ENCODE measurements at regions of chr12 and their contacts with region 1.

Region 1: DNA sequence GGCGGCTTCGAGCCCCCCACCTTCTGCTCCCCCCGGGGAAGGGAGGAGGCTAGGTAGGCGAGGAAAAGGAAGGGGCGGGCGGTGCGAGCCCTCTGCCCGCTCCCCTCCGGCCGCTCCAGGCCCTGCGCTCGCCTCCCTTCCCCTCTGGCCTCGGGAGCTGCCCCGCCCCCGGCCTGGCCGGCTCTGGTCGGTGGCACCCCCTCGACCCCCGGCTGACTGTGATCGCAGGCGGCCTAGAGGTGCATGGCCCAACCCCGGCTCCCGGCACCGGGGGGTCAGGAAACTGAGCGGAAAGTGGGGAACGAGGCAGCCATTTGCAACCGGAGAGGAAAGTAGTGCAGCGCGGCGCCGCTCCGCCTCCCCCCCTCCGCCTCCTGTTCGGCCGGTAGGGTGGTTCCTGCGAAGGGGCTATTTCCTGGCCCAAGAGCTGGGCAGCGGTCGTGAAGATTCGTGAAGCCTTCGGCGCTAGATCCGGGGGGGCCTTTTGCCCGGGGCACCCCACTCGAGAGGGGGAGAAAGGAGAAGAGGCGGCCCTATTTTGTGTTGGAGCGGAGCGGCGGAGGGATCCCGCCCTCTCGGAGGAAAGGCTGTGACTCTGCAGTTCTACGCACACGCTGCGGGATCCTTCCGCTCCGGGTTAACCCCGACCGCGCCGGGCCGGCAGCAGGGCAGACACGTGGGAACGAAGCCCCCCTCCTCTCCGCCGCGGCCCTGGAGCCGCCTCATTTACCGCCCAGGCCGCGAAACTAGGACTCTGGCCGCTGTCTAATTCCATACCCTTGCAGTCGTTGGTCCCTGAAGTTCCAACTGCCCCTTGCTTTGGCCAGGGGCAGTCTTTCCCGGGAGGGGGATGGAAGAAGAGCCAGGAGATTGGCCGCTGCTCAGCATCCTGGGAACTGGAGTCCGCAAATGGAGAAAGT is at the start of gene KMT2D:
- DNase-seq: peak; percentile 92 to 93
- ATAC-seq: peak; percentile 82 to 92 (median 86)
- H3K4me3 ChIP-seq: peak within 1 kb of the TSS; percentile 74 to 99 (median 97)
- H3K27ac ChIP-seq: peak within 1 kb of the TSS; percentile 95 to 100 (median 99)
- H3K4me1 ChIP-seq: peaks cover 23 to 51% (median 42%) of the 10 kb centered on the region in 9 donors
- H3K27me3 ChIP-seq: no peaks in the 10 kb centered on the region
- CTCF ChIP-seq: peak in 6 of 9 donors; percentile 31 to 46 (median 36)
- total RNA-seq, gene KMT2D: 32.6 to 65.3 (median 54.2) TPM

Region 2: GRCh38 chr12:49098035-49098451 is 37.5 kb after region 1 on chr12:
- intact Hi-C with region 1: loop called in 1 of 10 experiments (anchors 2 kb)
- DNase-seq: no peak
- ATAC-seq: peak in 3 of 8 donors; percentile 26 to 46 (median 29)
- H3K4me3 ChIP-seq: no peak overlapping the region
- H3K27ac ChIP-seq: no peak overlapping the region
- H3K4me1 ChIP-seq: peaks cover 13 to 24% (median 21%) of the 10 kb centered on the region in 9 donors
- H3K27me3 ChIP-seq: peaks cover 3 to 27% (median 13%) of the 10 kb centered on the region in 7 donors
- CTCF ChIP-seq: peak; percentile 66 to 88 (median 77)

Region 3: DNA sequence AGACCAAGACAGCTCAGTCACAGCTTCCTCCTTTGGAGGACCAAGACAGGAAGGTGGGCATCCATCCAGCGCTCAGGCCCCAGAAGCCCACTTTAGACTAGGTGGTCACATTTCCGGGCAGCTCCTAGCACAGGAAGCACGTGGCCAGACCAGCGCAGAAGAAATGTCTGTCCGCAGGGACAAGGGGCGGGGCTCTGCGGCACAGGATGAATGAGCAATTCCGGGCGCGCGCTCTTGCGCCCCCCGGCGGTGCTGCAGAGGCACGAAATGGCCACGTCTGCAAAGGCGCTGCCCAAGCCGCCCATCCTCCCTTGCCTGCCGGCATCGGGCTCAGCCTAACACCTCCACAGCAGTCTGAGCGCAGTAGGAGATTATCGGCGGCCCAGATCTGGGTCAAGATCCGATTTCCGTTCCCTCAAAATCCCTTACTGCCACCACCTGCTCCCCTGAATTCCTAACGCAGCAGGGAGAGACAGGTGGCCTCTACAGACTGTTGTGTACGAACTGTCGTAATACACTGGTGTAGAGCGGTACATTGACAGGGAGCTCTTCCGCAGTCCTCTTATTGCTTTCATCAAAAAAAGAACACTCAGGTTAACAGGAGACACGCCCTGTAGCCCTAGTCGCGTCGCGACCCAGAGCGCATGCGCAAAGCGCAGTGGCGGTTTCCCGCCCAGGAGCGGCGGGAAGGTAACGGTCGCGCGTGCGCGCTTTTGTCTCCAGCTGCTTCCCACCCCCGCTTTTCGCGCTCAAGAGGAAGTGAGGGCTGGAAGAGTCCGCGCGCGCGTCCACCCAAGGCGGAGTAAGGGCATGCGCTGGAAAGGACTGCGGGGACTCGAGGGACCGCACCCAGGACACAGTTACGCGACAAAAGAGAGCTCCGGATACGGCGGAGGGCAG is 69.9 kb after region 1 on chr12:
- intact Hi-C with region 1: loop called in 5 of 10 experiments (anchors 5 to 10 kb)
- DNase-seq: peak; percentile 95
- ATAC-seq: peak; percentile 86 to 94 (median 90)
- H3K4me3 ChIP-seq: peak overlapping the region; percentile 66 to 98 (median 86)
- H3K27ac ChIP-seq: peak overlapping the region; percentile 94 to 100 (median 99)
- H3K4me1 ChIP-seq: peaks cover 4 to 42% (median 31%) of the 10 kb centered on the region in 9 donors
- H3K27me3 ChIP-seq: no peaks in the 10 kb centered on the region
- CTCF ChIP-seq: peak; percentile 74 to 98 (median 93)

Region 4: DNA sequence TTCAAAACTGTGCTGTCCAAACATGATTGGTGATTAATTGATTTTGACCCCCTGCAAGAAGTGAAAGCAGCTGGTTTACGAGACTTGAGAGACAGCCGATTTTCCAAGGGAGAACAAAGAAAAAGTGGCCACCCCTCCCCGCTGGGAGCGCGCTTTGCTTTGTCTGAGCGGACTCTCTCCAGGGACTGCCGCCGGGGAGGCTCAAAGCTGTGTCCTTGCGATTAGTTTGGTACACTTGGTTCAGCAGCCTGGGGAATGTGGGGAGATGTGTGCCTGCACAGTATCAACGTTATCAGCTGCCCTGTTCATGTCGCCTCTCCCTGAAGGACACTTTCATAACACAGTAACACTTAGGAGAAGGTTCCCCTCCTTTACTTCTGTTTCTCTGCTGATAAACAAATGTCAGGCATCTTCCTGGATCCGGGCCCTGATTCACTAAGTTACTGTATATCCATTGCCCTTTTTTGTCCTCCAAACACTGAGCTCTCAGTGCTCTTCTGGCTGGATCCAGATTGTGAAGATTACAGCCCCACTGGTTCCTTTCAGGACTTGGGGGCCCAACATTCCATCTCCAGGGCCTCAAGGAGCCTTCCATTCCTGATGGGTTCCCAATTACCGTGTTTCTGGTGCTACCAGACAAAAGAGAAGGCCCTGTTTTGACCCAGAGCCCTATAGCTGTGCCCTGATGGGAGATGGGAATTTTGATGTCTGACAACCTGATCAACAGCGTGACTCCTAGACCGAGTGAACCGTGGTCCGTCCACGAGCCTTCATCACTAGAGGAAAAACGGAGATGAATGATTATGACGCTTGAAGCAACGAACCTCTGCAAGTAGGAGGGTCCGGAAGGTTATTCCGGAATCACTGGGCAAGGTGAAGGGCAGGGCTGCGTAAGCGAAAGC is 172.7 kb after region 1 on chr12:
- intact Hi-C with region 1: loop called in 6 of 10 experiments (anchors 1 to 5 kb)
- DNase-seq: peak; percentile 76 to 77
- ATAC-seq: peak; percentile 27 to 89 (median 72)
- H3K4me3 ChIP-seq: peak overlapping the region in 7 of 10 donors; percentile 14 to 73 (median 25)
- H3K27ac ChIP-seq: peak overlapping the region; percentile 79 to 97 (median 94)
- H3K4me1 ChIP-seq: peaks cover 6 to 50% (median 25%) of the 10 kb centered on the region in 9 donors
- H3K27me3 ChIP-seq: no peaks in the 10 kb centered on the region
- CTCF ChIP-seq: peak in 5 of 9 donors; percentile 9 to 39 (median 25)